ENCODE measurements at regions of chr14 and their contacts with region 1.

Region 1: GRCh38 chr14:74293606-74294005 is 9.1 kb downstream of the ABCD4 start:
- DNase-seq: no peak
- H3K4me3 ChIP-seq: no peak overlapping the region
- H3K27ac ChIP-seq: no peak overlapping the region
- H3K27me3 ChIP-seq: no peaks in the 10 kb centered on the region
- CTCF ChIP-seq: no peak

Region 2: DNA sequence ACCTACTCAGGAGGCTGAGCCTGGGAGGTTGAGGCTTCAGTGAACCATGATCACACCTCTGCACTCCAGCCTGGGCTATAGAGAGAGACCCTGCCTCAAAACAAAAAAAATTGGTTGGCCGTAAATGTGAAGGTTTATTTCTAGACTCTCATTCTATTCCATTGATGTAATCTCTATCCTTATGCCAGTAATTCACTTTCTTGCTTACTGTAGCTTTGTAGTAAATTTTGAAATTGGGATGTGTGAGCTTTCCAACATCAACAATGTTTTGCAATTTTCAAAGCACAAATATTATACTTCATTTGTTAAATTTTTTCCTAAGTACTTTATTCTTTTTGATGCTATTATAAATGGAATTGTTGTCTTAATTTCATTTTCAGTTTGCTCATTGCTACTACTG is 184.2 kb before region 1 on chr14:
- CTCF ChIA-PET with region 1: interaction called, 13 read pairs
- POLR2A ChIA-PET with region 1: no interaction called
- DNase-seq: no peak
- H3K4me3 ChIP-seq: no peak overlapping the region
- H3K27ac ChIP-seq: no peak overlapping the region
- H3K27me3 ChIP-seq: no peaks in the 10 kb centered on the region
- CTCF ChIP-seq: no peak

Region 3: DNA sequence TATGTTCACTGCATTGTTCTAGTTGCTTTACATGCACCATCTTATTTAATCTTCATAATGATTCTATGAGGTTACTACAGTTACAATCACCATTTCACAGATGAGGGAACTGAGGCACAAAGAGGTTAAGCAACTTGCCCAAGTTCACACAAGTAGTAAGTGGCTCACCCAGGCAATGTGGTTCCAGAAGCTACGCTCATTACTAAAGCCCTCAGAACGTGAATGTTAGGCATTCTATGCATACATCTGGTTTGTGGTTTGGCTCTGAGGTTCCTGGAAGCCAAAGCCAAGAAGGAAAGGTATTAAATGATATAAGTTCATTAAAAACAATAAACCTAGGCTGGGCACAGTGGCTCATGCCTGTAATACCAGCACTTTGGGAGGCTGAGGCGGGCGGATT is 40.3 kb after region 1 on chr14:
- CTCF ChIA-PET with region 1: no interaction called
- POLR2A ChIA-PET with region 1: no interaction called
- DNase-seq: peak; percentile 62
- H3K4me3 ChIP-seq: no peak overlapping the region
- H3K27ac ChIP-seq: no peak overlapping the region
- H3K27me3 ChIP-seq: peaks cover 9% of the 10 kb centered on the region
- CTCF ChIP-seq: no peak

Measured in AG04450 (cell line).